Activated CD8-positive, alpha-beta T cell treated with anti-CD3 and anti-CD28 coated beads, Interleukin-2, amount 10 ng/mL, durations not matched to agents 7 days and 5 days (primary cell): ENCODE measurements at regions of chr2 and their contacts with region 1.

Region 1: DNA sequence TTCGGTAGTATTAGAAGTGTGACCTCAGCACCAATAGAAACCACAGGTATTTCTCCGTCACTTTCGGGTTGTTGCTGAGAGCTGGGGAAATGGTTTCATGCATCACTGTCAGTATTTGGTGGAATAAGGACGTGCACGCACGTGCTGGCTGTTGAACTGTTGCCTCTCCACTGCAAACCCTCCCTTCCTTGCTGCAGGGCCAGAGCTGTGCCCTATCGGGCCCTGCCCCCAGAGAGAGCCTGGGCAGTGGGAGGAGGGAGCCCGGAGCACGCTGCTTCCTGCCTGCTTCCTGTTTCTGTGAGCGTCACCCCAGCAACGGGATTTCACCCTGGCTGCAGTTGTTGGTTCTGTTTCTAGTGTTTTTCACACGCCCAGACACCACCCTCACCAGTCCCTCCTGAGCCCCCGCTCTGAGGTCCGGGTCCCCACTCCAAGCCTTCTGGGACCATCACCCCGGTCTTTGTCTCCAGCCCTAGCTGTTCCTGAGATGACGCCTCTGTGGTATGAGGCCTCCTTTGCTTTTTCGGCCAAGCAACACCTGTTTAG is 47.4 kb downstream of the LRRFIP1 start:
- DNase-seq: peak; percentile 89
- ATAC-seq: peak; percentile 82
- H3K4me3 Mint-ChIP-seq: peak overlapping the region; percentile 77
- H3K27ac Mint-ChIP-seq: peak overlapping the region; percentile 96
- H3K4me1 Mint-ChIP-seq: peaks cover 48% of the 10 kb centered on the region
- H3K27me3 Mint-ChIP-seq: peaks cover 3% of the 10 kb centered on the region

Region 2: DNA sequence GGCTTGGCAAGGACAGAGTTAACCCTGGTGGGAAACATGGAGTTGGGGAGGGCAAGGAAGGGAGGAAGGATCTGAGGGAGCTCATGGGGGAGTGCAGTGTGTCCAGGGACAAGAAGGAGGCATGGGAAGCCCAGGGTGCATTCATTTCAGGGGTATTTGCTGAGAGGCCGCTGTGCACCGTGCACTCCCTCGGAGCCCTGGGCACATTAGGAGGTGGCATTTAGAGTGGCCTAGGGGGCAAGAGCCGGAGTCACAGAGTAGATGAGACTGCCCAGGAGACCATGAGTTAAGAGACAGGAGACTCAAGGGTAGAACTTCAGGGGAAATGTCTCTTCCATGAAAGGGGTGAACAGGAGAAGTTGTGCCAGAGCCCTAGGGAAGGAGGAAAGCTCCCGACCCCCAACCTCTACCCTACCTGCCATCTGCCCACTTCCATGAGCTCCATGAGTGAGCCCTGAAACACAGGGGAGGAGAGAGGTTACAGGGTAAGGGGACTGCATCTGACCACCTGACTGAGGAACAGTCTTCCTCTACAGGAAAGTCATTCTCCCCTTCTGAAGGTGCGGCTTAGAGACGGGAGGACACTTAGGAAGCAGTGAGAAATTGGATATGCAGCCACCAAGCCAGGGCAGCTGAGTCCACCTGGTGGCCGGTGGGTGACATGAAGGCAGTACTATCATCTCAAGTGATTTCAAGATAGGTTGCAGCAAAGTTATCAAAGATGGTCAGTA is 647.7 kb before region 1 on chr2:
- CTCF ChIA-PET with region 1: no interaction called
- POLR2A ChIA-PET with region 1: no interaction called
- DNase-seq: peak; percentile 52
- ATAC-seq: peak; percentile 60
- H3K4me3 Mint-ChIP-seq: no peak overlapping the region
- H3K27ac Mint-ChIP-seq: no peak overlapping the region
- H3K4me1 Mint-ChIP-seq: no peaks in the 10 kb centered on the region
- H3K27me3 Mint-ChIP-seq: no peaks in the 10 kb centered on the region

Region 3: DNA sequence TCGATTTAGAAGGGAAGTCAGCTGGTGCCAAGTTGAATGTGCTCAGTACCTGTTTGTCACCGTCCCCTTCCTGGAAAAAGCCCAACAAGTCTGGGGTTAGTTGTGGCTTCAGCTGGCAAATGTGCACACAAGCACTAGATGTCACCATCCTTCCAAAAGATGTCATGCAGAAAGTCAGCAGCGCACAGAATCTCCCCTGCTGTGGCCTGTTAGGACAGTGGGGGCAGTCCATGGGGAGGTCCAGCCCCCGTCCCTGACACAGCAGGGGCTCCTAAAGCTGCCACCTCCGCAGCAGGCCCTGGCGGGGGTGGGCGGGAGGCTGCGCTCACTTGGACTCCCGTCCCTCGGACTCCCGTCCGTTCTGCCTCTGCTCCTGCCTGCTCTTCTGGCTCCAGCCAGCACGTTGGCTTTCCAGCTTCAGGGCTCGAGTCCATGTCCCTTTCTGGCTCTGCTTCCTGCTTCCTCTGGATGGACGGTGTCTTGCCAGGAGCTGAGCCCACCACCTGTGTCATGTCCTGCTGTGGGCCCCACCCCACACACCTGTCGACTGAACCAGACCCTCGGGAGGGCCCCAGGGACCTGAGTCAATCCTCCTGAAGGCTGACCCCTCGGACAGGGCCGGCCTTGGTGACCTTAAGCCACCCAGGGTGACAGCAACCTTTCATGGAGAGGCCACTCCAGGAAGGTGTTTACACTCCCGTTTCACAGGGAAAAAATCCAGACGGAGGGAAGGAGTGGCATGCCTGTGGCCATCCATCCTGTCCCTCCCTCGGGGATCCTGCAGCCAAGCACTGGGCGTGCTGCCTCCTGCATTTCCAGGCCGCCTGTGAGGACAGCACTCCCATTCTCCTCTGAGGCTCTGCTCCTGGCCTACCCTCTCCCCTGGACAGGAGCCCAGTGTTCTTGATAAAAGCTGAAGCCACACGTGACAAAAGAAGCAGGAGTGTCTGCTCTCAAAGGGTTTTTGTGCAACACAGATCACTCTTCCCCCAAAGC is 92.8 kb before region 1 on chr2:
- CTCF ChIA-PET with region 1: interaction called, 20 read pairs
- POLR2A ChIA-PET with region 1: interaction called, 3 read pairs
- DNase-seq: peak; percentile 77
- ATAC-seq: peak; percentile 91
- H3K4me3 Mint-ChIP-seq: no peak overlapping the region
- H3K27ac Mint-ChIP-seq: peak overlapping the region; percentile 7
- H3K4me1 Mint-ChIP-seq: peaks cover 6% of the 10 kb centered on the region
- H3K27me3 Mint-ChIP-seq: no peaks in the 10 kb centered on the region

Region 4: GRCh38 chr2:237685408-237685807 is 10.6 kb after region 1 on chr2:
- CTCF ChIA-PET with region 1: interaction called, 202 read pairs
- POLR2A ChIA-PET with region 1: interaction called, 199 read pairs
- DNase-seq: no peak
- ATAC-seq: no peak
- H3K4me3 Mint-ChIP-seq: no peak overlapping the region
- H3K27ac Mint-ChIP-seq: no peak overlapping the region
- H3K4me1 Mint-ChIP-seq: peaks cover 53% of the 10 kb centered on the region
- H3K27me3 Mint-ChIP-seq: no peaks in the 10 kb centered on the region

Region 5: GRCh38 chr2:237691908-237692600 is 17.2 kb after region 1 on chr2:
- CTCF ChIA-PET with region 1: interaction called, 202 read pairs
- POLR2A ChIA-PET with region 1: interaction called, 199 read pairs
- DNase-seq: peak; percentile 95
- ATAC-seq: peak; percentile 70
- H3K4me3 Mint-ChIP-seq: peak overlapping the region; percentile 93
- H3K27ac Mint-ChIP-seq: peak overlapping the region; percentile 93
- H3K4me1 Mint-ChIP-seq: peaks cover 55% of the 10 kb centered on the region
- H3K27me3 Mint-ChIP-seq: no peaks in the 10 kb centered on the region

Region 6: DNA sequence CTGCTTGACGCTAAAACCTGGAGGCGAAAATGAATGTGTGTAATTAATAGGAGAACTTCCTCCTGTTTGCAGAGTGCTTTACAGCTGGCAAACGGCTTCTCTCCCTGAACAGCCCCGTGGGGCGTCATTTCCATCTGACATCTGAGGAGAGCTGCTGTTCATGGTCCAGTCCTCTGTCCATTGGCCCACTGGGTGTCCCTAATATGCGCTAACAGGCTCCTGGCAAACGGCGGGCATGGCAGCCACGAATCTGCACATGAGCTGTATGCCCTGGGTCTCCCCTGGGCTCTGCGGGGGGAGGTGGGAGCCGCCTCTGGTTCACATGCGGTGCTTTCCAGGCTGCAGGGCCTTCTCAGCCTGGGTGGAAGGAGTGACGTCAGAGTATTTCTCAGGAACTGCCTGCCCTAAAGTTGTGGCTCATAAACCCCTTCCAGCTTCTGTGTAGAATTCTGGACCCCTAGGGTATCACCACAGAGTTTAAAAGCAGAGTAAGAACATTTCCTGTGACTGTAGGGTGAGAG is 25.8 kb after region 1 on chr2:
- CTCF ChIA-PET with region 1: interaction called, 202 read pairs
- POLR2A ChIA-PET with region 1: interaction called, 199 read pairs
- DNase-seq: peak; percentile 64
- ATAC-seq: peak; percentile 52
- H3K4me3 Mint-ChIP-seq: peak overlapping the region; percentile 65
- H3K27ac Mint-ChIP-seq: peak overlapping the region; percentile 89
- H3K4me1 Mint-ChIP-seq: peaks cover 97% of the 10 kb centered on the region
- H3K27me3 Mint-ChIP-seq: no peaks in the 10 kb centered on the region

Region 7: DNA sequence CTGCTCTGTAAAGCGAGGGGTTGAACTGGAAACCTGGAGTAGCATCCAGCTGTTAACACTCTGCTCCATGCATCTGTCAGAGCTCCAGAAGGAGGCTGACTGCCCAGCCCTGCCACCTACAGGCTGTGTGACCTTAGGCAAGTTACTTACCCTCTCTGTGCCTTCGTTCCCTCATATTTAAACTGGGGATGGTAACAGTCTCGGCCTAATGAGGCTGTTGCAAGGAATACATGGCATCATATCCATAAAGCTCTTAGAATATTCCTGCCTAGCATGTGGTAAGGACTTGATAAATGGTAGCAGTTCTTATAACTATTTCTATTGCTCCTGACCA is 33.2 kb after region 1 on chr2:
- CTCF ChIA-PET with region 1: interaction called, 79 read pairs
- POLR2A ChIA-PET with region 1: interaction called, 4 read pairs
- DNase-seq: no peak
- ATAC-seq: no peak
- H3K4me3 Mint-ChIP-seq: no peak overlapping the region
- H3K27ac Mint-ChIP-seq: no peak overlapping the region
- H3K4me1 Mint-ChIP-seq: peaks cover 59% of the 10 kb centered on the region
- H3K27me3 Mint-ChIP-seq: no peaks in the 10 kb centered on the region